Activated B cell treated with CpG ODN at 0.5 μM for 24 hours (primary cell): ENCODE measurements at regions of chr3 and their contacts with region 1.

Region 1: GRCh38 chr3:10248184-10249080 is at the start of gene TATDN2:
- DNase-seq: peak; percentile 88
- ATAC-seq: peak; percentile 97
- H3K4me3 Mint-ChIP-seq: peak within 1 kb of the TSS; percentile 95
- H3K27ac Mint-ChIP-seq: peak within 1 kb of the TSS; percentile 91
- H3K4me1 Mint-ChIP-seq: peaks cover 39% of the 10 kb centered on the region
- H3K27me3 Mint-ChIP-seq: no peaks in the 10 kb centered on the region
- CTCF ChIP-seq: no peak
- total RNA-seq, gene TATDN2: 55.6 and 56.2 TPM in 2 replicates

Region 2: GRCh38 chr3:9396700-9397521 is 851.5 kb before region 1 on chr3:
- CTCF ChIA-PET with region 1: no interaction called
- POLR2A ChIA-PET with region 1: interaction called, 8 read pairs
- intact Hi-C with region 1: loop called (anchors 2 kb)
- DNase-seq: peak; percentile 99
- ATAC-seq: peak; percentile 71
- H3K4me3 Mint-ChIP-seq: peak overlapping the region; percentile 98
- H3K27ac Mint-ChIP-seq: peak overlapping the region; percentile 100
- H3K4me1 Mint-ChIP-seq: peaks cover 61% of the 10 kb centered on the region
- H3K27me3 Mint-ChIP-seq: no peaks in the 10 kb centered on the region
- CTCF ChIP-seq: no peak

Region 3: GRCh38 chr3:9951962-9952805 is 296.2 kb before region 1 on chr3 and contains the start of gene PRRT3:
- CTCF ChIA-PET with region 1: no interaction called
- POLR2A ChIA-PET with region 1: interaction called, 6 read pairs
- intact Hi-C with region 1: loop called (anchors 1 kb)
- DNase-seq: peak; percentile 41
- ATAC-seq: peak; percentile 90
- H3K4me3 Mint-ChIP-seq: peak within 1 kb of the TSS; percentile 85
- H3K27ac Mint-ChIP-seq: no peak within 1 kb of the TSS
- H3K4me1 Mint-ChIP-seq: peaks cover 15% of the 10 kb centered on the region
- H3K27me3 Mint-ChIP-seq: no peaks in the 10 kb centered on the region
- CTCF ChIP-seq: no peak
- total RNA-seq, gene PRRT3: 4.2 and 4.3 TPM in 2 replicates

Region 4: GRCh38 chr3:10004506-10004905 is 243.9 kb before region 1 on chr3:
- CTCF ChIA-PET with region 1: no interaction called
- POLR2A ChIA-PET with region 1: no interaction called
- intact Hi-C with region 1: no loop called
- DNase-seq: no peak
- ATAC-seq: no peak
- H3K4me3 Mint-ChIP-seq: no peak overlapping the region
- H3K27ac Mint-ChIP-seq: no peak overlapping the region
- H3K4me1 Mint-ChIP-seq: peaks cover 10% of the 10 kb centered on the region
- H3K27me3 Mint-ChIP-seq: no peaks in the 10 kb centered on the region
- CTCF ChIP-seq: no peak

Region 5: DNA sequence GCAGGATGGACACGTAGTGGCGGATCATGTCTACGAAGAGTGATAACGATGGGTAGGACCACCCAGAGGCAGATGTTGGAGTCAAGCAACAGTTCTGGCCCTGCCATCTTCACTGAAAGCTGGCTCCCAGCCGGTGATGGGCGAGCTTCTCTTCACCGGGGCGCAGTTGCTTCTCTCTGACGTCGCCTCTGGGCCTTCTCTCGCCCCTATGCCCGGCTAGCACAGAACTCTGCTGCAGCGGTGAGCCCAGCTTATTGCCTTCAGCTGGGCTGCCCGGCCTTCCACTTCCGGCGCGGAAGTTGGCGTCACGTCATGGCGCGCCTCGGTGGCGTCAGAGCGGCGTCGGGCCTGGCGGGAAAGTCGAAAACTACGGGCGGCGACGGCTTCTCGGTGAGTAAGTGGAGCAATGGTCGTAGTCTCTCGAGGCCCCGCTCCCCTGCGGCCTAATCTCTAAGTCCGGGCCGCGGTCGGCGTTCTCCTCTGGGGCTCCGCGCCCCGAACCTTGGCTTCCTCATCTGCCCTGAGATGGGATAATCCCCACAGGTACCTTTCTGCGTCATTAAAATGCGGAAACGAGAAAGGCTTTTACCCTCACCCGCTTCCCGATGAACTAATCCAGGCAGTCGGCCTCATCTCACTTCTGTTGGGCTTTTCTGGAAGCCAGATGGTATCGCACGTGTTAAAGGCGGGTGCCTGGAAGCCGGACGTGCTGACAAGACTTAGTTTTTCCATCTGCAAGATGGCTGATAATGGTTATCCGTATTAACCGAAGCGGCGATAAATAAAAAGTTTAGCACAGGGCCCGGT is 222.1 kb before region 1 on chr3 and contains the start of gene FANCD2:
- CTCF ChIA-PET with region 1: no interaction called
- POLR2A ChIA-PET with region 1: interaction called, 9 read pairs
- intact Hi-C with region 1: loop called (anchors 1 kb)
- DNase-seq: peak; percentile 97
- ATAC-seq: peak; percentile 86
- H3K4me3 Mint-ChIP-seq: peak within 1 kb of the TSS; percentile 96
- H3K27ac Mint-ChIP-seq: peak within 1 kb of the TSS; percentile 96
- H3K4me1 Mint-ChIP-seq: peaks cover 37% of the 10 kb centered on the region
- H3K27me3 Mint-ChIP-seq: no peaks in the 10 kb centered on the region
- CTCF ChIP-seq: no peak
- total RNA-seq, gene FANCD2: 26.8 and 31.4 TPM in 2 replicates

Region 6: DNA sequence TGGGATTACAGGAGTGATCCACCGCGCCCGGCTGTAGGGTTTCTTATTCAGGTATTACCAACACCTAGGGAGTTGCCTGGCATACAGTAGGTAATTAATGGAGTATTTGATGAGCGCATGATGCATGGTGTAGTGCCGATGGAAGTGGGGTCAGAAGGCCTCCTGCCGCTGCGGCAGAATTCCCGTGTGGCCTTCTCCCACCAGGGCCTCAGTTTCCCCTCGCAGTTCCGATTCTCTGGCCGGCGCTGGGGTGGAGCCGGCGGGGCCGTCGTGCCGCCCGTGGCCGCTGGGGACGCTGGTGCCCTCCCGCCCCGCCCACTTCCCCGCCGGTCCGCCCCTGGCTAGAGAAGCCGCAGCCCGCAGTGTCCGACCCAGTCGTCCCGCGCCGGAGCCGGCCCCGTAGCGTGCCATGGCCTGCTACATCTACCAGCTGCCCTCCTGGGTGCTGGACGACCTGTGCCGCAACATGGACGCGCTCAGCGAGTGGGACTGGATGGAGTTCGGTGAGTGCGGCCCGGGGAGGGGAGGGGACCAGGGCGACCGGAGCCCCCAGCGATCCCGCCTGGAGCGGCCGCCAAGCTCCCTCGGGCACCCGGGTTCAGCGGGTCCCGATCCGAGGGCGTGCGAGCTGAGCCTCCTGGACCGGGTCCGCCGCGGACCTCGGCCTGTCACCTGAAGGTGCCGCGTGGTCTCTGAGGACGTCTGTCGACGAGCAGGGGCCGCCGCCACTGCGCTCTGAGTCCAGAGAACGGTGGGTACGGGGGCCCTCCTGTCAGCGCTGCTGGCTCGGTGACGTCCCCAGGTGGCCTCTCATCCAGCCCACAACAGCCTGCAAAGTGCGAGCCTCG is 83.7 kb before region 1 on chr3 and contains the start of gene IRAK2:
- CTCF ChIA-PET with region 1: no interaction called
- POLR2A ChIA-PET with region 1: interaction called, 6 read pairs
- intact Hi-C with region 1: loop called (anchors 1 kb)
- DNase-seq: peak; percentile 65
- ATAC-seq: peak; percentile 91
- H3K4me3 Mint-ChIP-seq: peak within 1 kb of the TSS; percentile 86
- H3K27ac Mint-ChIP-seq: no peak within 1 kb of the TSS
- H3K4me1 Mint-ChIP-seq: peaks cover 38% of the 10 kb centered on the region
- H3K27me3 Mint-ChIP-seq: no peaks in the 10 kb centered on the region
- CTCF ChIP-seq: peak; percentile 64
- total RNA-seq, gene IRAK2: 8.6 and 8.8 TPM in 2 replicates

Region 7: DNA sequence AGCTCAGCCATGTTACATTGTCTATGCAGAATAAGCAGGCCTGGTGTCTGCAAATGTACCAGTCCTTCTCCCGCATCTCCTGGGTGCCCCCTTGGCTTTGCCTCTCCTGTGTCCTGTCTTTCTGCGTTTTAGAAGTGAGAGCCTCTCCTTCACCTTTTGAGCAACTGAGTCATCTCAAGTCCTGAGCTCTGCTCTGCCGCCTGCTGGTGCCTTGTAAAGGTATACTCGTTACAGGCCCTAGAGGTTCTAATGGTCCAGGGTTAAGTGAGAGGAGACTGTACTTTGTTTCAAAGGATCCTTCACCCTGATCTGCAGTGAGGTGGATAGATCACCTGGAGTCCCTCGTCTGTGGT is 31.7 kb after region 1 on chr3:
- CTCF ChIA-PET with region 1: no interaction called
- POLR2A ChIA-PET with region 1: no interaction called
- intact Hi-C with region 1: no loop called
- DNase-seq: no peak
- ATAC-seq: no peak
- H3K4me3 Mint-ChIP-seq: no peak overlapping the region
- H3K27ac Mint-ChIP-seq: no peak overlapping the region
- H3K4me1 Mint-ChIP-seq: peaks cover 12% of the 10 kb centered on the region
- H3K27me3 Mint-ChIP-seq: no peaks in the 10 kb centered on the region
- CTCF ChIP-seq: no peak

Region 8: GRCh38 chr3:10292505-10293419 is 44.3 kb after region 1 on chr3 and contains the start of gene GHRL:
- CTCF ChIA-PET with region 1: interaction called, 3 read pairs
- POLR2A ChIA-PET with region 1: interaction called, 7 read pairs
- intact Hi-C with region 1: loop called (anchors 2 kb)
- DNase-seq: peak; percentile 50
- ATAC-seq: peak; percentile 91
- H3K4me3 Mint-ChIP-seq: peak within 1 kb of the TSS; percentile 81
- H3K27ac Mint-ChIP-seq: peak within 1 kb of the TSS; percentile 85
- H3K4me1 Mint-ChIP-seq: peaks cover 36% of the 10 kb centered on the region
- H3K27me3 Mint-ChIP-seq: no peaks in the 10 kb centered on the region
- CTCF ChIP-seq: no peak
- total RNA-seq, gene GHRL: 1.4 and 2.8 TPM in 2 replicates